ENCODE measurements at regions of chr3 and their contacts with region 1.

Region 1: DNA sequence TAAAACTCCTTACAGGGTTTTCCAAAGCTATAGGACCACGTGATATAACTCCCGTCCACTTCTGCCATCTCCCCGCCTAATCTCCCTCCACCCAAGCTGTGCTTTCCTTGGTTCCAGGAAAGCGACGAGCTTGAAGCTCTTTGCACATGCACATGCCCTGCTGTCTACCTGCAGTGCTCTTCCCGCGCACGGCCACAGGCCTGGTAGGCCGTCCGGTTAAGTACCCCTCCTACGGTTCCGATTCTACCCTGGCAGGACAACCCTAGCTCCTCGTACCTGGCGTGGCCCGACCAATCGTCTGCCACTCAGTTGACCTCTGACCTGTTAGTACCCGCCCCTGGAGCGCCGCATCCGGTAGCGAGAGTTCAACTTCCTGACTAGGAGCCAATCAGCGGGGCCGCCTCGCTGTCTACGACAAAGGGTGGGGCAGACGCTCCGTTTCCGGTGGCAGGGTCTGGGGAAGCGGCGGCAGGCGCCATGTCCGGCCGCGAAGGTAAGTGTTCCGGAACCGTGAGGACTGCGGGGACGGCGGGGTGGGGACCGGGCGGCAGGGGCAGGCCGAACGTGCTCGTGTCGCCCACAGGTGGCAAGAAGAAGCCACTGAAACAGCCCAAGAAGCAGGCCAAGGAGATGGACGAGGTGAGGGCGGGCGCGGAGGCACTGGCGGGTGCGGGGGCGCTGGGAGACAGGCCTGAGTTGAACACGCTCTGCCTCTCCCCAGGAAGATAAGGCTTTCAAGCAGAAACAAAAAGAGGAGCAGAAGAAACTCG is at the starts of genes CCDC51 and TMA7:
- H3K4me3 ChIP-seq: peak within 1 kb of the TSS; percentile 84
- H3K27ac ChIP-seq: peak within 1 kb of the TSS; percentile 67
- H3K4me1 ChIP-seq: no peaks in the 10 kb centered on the region
- CTCF ChIP-seq: peak; percentile 48; the same call in 1 of the 2 replicates

Region 2: DNA sequence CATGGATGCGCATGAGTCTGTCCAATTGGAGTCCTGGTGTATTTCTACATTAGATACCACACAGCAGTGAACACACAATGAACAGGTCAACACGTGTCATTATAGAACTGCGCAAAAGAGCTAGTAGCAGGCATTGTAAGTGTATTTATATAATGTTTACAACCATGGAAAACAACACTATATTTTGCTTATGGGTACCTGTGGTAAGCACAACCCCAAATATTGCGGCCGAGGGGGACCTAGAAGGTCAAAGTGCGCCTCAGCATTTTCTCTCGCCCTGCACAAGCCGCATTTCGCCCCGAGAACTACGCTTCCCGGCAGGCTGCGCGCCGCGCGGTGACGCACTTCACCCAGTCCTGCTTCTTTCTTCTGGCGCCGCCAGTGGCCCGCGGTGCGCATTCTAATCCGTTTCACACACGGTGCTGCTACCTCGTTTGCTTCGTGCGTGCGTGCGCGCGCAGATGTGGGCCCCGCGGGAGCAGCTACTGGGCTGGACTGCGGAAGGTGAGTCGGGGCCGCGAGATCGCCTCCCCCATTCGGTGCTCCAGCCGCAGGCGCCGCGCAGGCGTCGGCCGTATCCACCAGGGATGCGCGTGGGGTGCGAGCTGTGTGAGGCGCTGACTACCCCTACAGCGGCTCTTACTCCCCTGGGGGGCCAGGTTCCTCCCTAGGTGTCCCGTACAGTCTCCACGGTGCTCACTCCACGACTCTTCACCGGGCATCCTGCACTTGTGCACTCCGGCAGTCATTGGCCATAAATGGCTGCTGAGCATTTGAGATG is 199.1 kb before region 1 on chr3 and contains the start of gene ZNF589:
- CTCF ChIA-PET with region 1: interaction called, 13 read pairs
- POLR2A ChIA-PET with region 1: interaction called, 5 read pairs
- H3K4me3 ChIP-seq: peak within 1 kb of the TSS; percentile 71
- H3K27ac ChIP-seq: peak within 1 kb of the TSS; percentile 84
- H3K4me1 ChIP-seq: no peaks in the 10 kb centered on the region
- CTCF ChIP-seq: peak; percentile 73

Region 3: GRCh38 chr3:48306860-48307530 is 133.0 kb before region 1 on chr3:
- CTCF ChIA-PET with region 1: interaction called, 12 read pairs
- POLR2A ChIA-PET with region 1: no interaction called
- H3K4me3 ChIP-seq: no peak overlapping the region
- H3K27ac ChIP-seq: no peak overlapping the region
- H3K4me1 ChIP-seq: no peaks in the 10 kb centered on the region
- CTCF ChIP-seq: no peak

Region 4: DNA sequence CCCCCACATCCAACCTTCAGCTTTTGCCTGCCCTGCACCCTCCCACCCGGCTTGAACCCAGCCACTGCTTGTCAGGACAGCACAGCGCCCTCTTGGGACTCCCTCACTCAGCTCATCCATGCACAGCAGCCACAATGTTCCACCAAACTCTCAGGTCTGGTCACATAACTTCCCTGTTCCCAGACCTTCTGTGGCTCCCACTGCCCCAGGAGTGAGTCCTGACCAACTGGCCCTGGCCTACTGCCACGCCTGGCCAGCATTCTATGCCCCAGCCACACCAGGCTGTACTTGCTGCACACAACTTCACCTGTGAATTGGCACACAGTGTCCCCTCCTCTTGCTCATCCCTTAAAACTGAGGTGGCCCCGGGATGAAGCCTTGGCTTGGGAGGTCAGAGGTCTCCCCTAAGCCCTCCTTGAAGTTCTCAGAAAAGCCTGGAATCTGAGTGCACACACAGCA is 31.2 kb before region 1 on chr3:
- CTCF ChIA-PET with region 1: interaction called, 238 read pairs
- POLR2A ChIA-PET with region 1: interaction called, 5 read pairs
- H3K4me3 ChIP-seq: no peak overlapping the region
- H3K27ac ChIP-seq: no peak overlapping the region
- H3K4me1 ChIP-seq: no peaks in the 10 kb centered on the region
- CTCF ChIP-seq: no peak

Region 5: GRCh38 chr3:48507351-48508061 is 67.5 kb after region 1 on chr3:
- CTCF ChIA-PET with region 1: interaction called, 29 read pairs
- POLR2A ChIA-PET with region 1: interaction called, 4 read pairs
- H3K4me3 ChIP-seq: no peak overlapping the region
- H3K27ac ChIP-seq: no peak overlapping the region
- H3K4me1 ChIP-seq: no peaks in the 10 kb centered on the region
- CTCF ChIP-seq: peak; percentile 70

Region 6: GRCh38 chr3:48679411-48680391 is 239.7 kb after region 1 on chr3:
- CTCF ChIA-PET with region 1: no interaction called
- POLR2A ChIA-PET with region 1: no interaction called
- H3K4me3 ChIP-seq: no peak overlapping the region
- H3K27ac ChIP-seq: no peak overlapping the region
- H3K4me1 ChIP-seq: peaks cover 8% of the 10 kb centered on the region
- CTCF ChIP-seq: no peak

Measured in HEK293 (cell line).